ENCODE measurements at regions of chr3 and their contacts with region 1.

Region 1: GRCh38 chr3:24220859-24221657 is 273.6 kb downstream of the THRB start:
- DNase-seq: no peak
- ATAC-seq: no peak
- H3K4me3 ChIP-seq: no peak overlapping the region
- H3K4me3 Mint-ChIP-seq: no peak overlapping the region
- H3K27ac ChIP-seq: no peak overlapping the region
- H3K27ac Mint-ChIP-seq: no peak overlapping the region
- H3K4me1 ChIP-seq: no peaks in the 10 kb centered on the region
- H3K4me1 Mint-ChIP-seq: no peaks in the 10 kb centered on the region
- H3K27me3 ChIP-seq: peaks cover 0 to 3% of the 10 kb centered on the region in 2 experiments
- H3K27me3 Mint-ChIP-seq: peaks cover 2 to 6% of the 10 kb centered on the region in 2 donors

Region 2: DNA sequence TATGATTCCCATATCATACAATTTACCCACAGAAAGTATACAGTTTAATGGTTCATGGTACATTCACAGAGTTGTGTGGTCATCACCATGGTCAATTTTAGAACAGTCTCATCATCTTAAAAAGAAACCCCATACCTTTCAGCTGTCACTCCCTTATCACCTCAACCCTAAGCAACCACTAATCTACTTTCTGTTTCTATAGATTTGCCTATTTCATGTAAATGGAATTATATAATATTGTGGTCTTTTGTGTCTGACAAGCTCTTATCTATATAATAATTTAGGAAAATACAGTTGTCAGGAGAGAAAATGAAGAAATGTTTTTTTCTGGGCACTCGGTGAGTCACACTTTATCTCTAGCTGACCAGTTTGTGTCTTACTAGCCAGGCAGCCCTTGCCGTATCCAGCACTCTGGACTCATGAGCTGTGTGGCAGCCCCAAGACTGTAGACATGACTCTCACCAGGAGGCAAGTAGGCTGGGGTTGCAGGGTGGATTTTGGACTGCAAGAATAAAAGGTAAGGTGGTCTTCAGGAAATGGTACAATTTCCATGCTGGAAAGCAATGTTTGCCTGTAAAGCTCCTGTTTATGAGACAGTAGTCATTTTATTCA is 38.9 kb after region 1 on chr3:
- CTCF ChIA-PET with region 1: interaction called in 1 of 2 experiments, 11 read pairs
- POLR2A ChIA-PET with region 1: no interaction called
- DNase-seq: no peak
- ATAC-seq: no peak
- H3K4me3 ChIP-seq: no peak overlapping the region
- H3K4me3 Mint-ChIP-seq: no peak overlapping the region
- H3K27ac ChIP-seq: no peak overlapping the region
- H3K27ac Mint-ChIP-seq: no peak overlapping the region
- H3K4me1 ChIP-seq: no peaks in the 10 kb centered on the region
- H3K4me1 Mint-ChIP-seq: no peaks in the 10 kb centered on the region
- H3K27me3 ChIP-seq: no peaks in the 10 kb centered on the region
- H3K27me3 Mint-ChIP-seq: no peaks in the 10 kb centered on the region

Measured in T-cell (primary cell).